ENCODE measurements at regions of chr5 and their contacts with region 1.

Region 1: DNA sequence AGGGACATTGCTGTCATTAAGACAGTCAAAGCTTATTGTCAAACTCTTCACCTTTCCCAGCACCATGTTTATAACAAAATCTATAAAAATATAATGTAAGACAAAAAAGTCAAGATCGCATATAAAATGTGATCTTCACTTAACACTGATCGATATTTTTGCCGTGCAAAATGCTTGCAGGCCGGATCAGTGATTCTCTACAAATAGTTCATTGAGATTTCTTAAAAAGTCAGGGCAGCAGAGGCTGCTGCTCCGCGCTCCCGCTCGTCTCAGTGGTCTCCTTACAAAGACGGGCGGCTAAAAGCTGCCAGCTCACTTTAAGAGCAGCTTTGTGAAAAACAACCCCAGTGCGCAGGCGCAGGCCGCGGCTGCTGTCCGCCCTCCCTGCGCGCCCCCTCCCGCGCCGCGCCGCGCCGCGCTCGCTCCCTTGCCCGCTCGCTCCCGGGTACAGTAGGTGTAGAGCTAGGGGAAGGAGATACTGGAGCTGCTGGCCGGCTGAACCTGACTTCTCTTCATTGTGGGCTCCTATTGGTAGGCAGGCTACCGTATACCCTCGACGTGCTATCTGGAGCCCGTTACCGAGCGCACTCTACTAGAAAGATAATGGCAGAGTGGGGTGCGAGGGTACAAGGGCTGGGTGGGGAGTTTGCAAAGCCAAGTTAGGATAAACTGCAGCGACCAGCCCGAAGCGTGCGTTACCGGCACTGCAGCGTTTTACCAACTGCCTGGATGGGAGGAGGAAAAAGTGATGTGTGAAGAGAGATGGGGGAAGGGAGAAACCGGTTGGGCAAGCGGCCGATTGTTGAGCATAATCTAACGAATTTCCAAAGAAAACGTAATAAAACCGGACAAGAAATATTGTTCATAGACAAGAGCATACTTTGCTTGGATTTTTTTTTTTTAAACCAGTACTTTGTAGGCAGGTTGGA is at the start of gene ARRDC3:
- DNase-seq: peak; percentile 98
- H3K4me3 ChIP-seq: peak within 1 kb of the TSS; percentile 89 to 99 (median 90)
- H3K27ac ChIP-seq: peak within 1 kb of the TSS; percentile 96
- H3K4me1 ChIP-seq: peaks cover 17% of the 10 kb centered on the region
- H3K27me3 ChIP-seq: no peaks in the 10 kb centered on the region
- CTCF ChIP-seq: no peak
- POLR2A ChIP-seq: peak; percentile 99
- total RNA-seq, gene ARRDC3: 35.3 and 43.1 TPM in 2 replicates

Region 2: GRCh38 chr5:90878549-90879196 is 504.6 kb before region 1 on chr5:
- CTCF ChIA-PET with region 1: interaction called, 10 read pairs
- POLR2A ChIA-PET with region 1: interaction called, 6 read pairs
- dilution Hi-C with region 1: no loop called
- intact Hi-C with region 1: no loop called
- DNase-seq: peak; percentile 90
- H3K4me3 ChIP-seq: no peak overlapping the region
- H3K27ac ChIP-seq: peak overlapping the region; percentile 55
- H3K4me1 ChIP-seq: peaks cover 16% of the 10 kb centered on the region
- H3K27me3 ChIP-seq: no peaks in the 10 kb centered on the region
- CTCF ChIP-seq: no peak
- POLR2A ChIP-seq: no peak

Region 3: GRCh38 chr5:90968319-90968718 is 415.0 kb before region 1 on chr5:
- CTCF ChIA-PET with region 1: interaction called, 11 read pairs
- POLR2A ChIA-PET with region 1: interaction called, 8 read pairs
- dilution Hi-C with region 1: no loop called
- intact Hi-C with region 1: loop called (anchors 1 kb)
- DNase-seq: no peak
- H3K4me3 ChIP-seq: no peak overlapping the region
- H3K27ac ChIP-seq: peak overlapping the region; percentile 57
- H3K4me1 ChIP-seq: peaks cover 32% of the 10 kb centered on the region
- H3K27me3 ChIP-seq: no peaks in the 10 kb centered on the region
- CTCF ChIP-seq: no peak
- POLR2A ChIP-seq: no peak

Region 4: GRCh38 chr5:91033370-91033769 is 349.9 kb before region 1 on chr5:
- CTCF ChIA-PET with region 1: no interaction called
- POLR2A ChIA-PET with region 1: no interaction called
- dilution Hi-C with region 1: no loop called
- intact Hi-C with region 1: no loop called
- DNase-seq: no peak
- H3K4me3 ChIP-seq: no peak overlapping the region
- H3K27ac ChIP-seq: no peak overlapping the region
- H3K4me1 ChIP-seq: no peaks in the 10 kb centered on the region
- H3K27me3 ChIP-seq: no peaks in the 10 kb centered on the region
- CTCF ChIP-seq: no peak
- POLR2A ChIP-seq: no peak

Region 5: GRCh38 chr5:91110686-91111085 is 272.6 kb before region 1 on chr5:
- CTCF ChIA-PET with region 1: interaction called, 23 read pairs
- POLR2A ChIA-PET with region 1: interaction called, 4 read pairs
- dilution Hi-C with region 1: no loop called
- intact Hi-C with region 1: no loop called
- DNase-seq: no peak
- H3K4me3 ChIP-seq: no peak overlapping the region
- H3K27ac ChIP-seq: no peak overlapping the region
- H3K4me1 ChIP-seq: peaks cover 8% of the 10 kb centered on the region
- H3K27me3 ChIP-seq: no peaks in the 10 kb centered on the region
- CTCF ChIP-seq: no peak
- POLR2A ChIP-seq: no peak

Region 6: DNA sequence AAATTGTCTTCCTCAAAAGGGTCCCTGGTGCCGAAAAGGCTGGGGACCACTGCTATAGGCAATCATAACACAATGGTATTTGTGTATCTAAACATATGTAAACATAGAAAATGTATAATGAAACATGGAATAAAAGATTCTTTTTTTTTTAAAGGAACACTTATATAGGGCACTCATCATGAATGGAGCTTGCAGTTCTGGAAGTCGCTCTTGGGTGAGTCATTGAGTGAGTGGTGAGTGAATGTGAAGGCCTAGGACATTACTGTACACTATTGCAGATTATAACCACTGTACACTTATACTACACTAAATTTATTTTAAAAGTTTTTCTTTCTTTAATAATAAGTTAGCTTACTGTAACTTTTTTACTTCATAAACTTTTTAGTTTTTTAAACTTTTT is 176.6 kb before region 1 on chr5:
- CTCF ChIA-PET with region 1: interaction called, 11 read pairs
- POLR2A ChIA-PET with region 1: no interaction called
- dilution Hi-C with region 1: no loop called
- intact Hi-C with region 1: no loop called
- DNase-seq: no peak
- H3K4me3 ChIP-seq: no peak overlapping the region
- H3K27ac ChIP-seq: no peak overlapping the region
- H3K4me1 ChIP-seq: peaks cover 3% of the 10 kb centered on the region
- H3K27me3 ChIP-seq: no peaks in the 10 kb centered on the region
- CTCF ChIP-seq: no peak
- POLR2A ChIP-seq: no peak

Region 7: GRCh38 chr5:91280362-91281269 is 102.7 kb before region 1 on chr5:
- CTCF ChIA-PET with region 1: interaction called, 37 read pairs
- POLR2A ChIA-PET with region 1: interaction called, 25 read pairs
- dilution Hi-C with region 1: loop called (anchors 5 kb)
- intact Hi-C with region 1: loop called (anchors 1 kb)
- DNase-seq: peak; percentile 98
- H3K4me3 ChIP-seq: peak overlapping the region; percentile 2 to 71 (median 39)
- H3K27ac ChIP-seq: peak overlapping the region; percentile 99
- H3K4me1 ChIP-seq: peaks cover 24% of the 10 kb centered on the region
- H3K27me3 ChIP-seq: no peaks in the 10 kb centered on the region
- CTCF ChIP-seq: no peak
- POLR2A ChIP-seq: peak; percentile 86

Region 8: GRCh38 chr5:91419571-91420537 is 36.6 kb after region 1 on chr5:
- CTCF ChIA-PET with region 1: interaction called, 121 read pairs
- POLR2A ChIA-PET with region 1: interaction called, 6 read pairs
- dilution Hi-C with region 1: no loop called
- intact Hi-C with region 1: loop called (anchors 1 kb)
- DNase-seq: peak; percentile 77
- H3K4me3 ChIP-seq: no peak overlapping the region
- H3K27ac ChIP-seq: no peak overlapping the region
- H3K4me1 ChIP-seq: no peaks in the 10 kb centered on the region
- H3K27me3 ChIP-seq: no peaks in the 10 kb centered on the region
- CTCF ChIP-seq: peak in 1 of 2 donors; percentile 40
- POLR2A ChIP-seq: no peak

Region 9: DNA sequence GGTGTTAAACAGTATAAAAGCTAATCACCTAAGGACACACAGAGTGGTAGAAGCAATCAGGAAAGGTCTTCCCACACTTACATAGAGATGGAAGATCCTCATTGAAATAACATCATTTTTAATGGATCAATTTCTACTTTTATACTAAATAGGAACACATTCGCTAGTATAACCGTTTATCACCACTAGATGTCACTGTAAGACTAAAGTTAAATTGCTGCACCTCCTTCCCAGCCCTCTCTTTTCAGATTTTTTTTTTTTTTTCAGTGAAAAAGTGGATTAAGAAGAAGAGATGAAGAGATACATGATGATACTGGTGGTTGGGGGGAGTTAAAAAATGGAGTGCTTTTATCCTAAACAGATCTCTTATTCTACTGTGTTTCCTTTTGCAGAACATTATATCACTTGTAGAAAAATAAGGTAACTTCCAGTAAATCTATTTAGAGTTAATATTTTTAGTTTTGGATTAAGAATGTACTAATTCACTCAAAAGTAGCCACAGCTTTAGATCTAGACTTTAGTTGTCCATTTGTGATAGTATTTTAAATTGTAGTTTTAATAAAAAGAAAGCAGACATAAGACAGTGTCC is 116.7 kb after region 1 on chr5:
- CTCF ChIA-PET with region 1: no interaction called
- POLR2A ChIA-PET with region 1: no interaction called
- dilution Hi-C with region 1: no loop called
- intact Hi-C with region 1: no loop called
- DNase-seq: peak; percentile 54
- H3K4me3 ChIP-seq: no peak overlapping the region
- H3K27ac ChIP-seq: no peak overlapping the region
- H3K4me1 ChIP-seq: no peaks in the 10 kb centered on the region
- H3K27me3 ChIP-seq: peaks cover 0 to 5% of the 10 kb centered on the region in 2 experiments
- CTCF ChIP-seq: peak; percentile 28 to 30
- POLR2A ChIP-seq: no peak

Region 10: DNA sequence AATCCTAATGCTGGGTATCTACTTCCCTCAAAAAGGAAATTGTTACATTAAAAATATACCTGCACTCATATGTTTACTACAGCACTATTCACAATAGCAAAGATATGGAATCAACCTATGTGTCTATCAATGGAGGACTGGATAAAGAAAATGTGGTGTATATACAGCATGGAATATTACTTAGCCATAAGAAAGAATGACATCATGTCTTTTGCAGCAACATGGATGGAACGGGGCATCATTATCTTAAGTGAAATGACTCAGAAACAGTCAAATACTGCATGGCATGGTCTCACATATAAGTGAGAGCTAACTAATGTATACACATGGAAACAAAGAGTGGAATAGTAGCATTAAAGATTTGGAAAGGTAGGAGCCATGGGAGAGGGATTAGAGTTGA is 273.6 kb after region 1 on chr5:
- CTCF ChIA-PET with region 1: no interaction called
- POLR2A ChIA-PET with region 1: no interaction called
- dilution Hi-C with region 1: no loop called
- intact Hi-C with region 1: no loop called
- DNase-seq: no peak
- H3K4me3 ChIP-seq: no peak overlapping the region
- H3K27ac ChIP-seq: no peak overlapping the region
- H3K4me1 ChIP-seq: no peaks in the 10 kb centered on the region
- H3K27me3 ChIP-seq: no peaks in the 10 kb centered on the region
- CTCF ChIP-seq: no peak
- POLR2A ChIP-seq: no peak